B cell (primary cell): ENCODE measurements at regions of chr6 and their contacts with region 1.

Region 1: DNA sequence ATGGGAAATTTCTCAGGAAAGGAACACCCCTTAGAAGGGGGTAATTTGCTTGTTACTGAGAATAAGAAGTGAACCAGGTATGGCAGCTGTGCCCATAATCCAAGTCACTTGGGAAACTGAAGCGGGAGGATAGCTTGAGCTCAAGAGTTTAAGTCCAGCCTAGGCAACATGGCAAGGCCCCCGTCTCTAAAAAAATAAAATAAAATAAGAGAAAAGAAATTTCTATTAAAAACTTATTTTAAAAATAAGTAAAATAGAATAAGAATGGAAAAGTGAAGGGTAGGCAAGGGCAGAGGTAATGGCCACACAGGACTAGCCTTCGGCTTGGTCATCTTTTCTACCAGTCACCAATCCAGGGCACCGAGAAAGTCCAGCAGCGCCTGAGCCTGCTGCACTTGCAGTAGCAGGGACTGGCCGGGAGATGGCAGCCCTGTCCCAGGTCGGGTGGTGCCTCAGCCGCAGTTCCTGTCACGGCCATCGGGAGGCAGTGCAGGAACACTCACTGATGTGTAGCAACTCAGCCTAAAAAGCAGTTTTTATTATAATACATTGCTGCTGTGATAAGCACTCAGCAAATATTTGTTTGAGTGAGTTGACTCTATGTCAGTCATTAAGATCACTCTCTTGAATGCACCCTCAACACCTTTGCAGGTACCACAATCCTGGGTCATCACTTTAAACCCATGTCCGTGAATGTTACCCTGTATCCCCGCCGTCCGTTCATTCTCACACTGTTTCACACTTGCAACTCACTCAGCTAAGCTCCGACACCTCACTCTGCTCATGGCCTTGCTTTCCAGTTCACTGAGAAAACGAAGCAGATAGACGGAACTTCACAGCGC is 23.2 kb upstream of the GCM1 start:
- DNase-seq: peak; percentile 93
- ATAC-seq: peak; percentile 99
- H3K4me3 ChIP-seq: peak overlapping the region in 3 of 5 experiments; percentile 29 to 40 (median 34)
- H3K4me3 Mint-ChIP-seq: peak overlapping the region; percentile 65
- H3K27ac ChIP-seq: peak overlapping the region; percentile 76 to 88
- H3K27ac Mint-ChIP-seq: peak overlapping the region; percentile 81
- H3K4me1 ChIP-seq: peaks cover 28 to 30% of the 10 kb centered on the region in 2 donors
- H3K4me1 Mint-ChIP-seq: peaks cover 24% of the 10 kb centered on the region
- H3K27me3 ChIP-seq: no peaks in the 10 kb centered on the region
- H3K27me3 Mint-ChIP-seq: no peaks in the 10 kb centered on the region
- CTCF ChIP-seq: peak; percentile 100

Region 2: GRCh38 chr6:52995913-52996645 is 175.7 kb before region 1 on chr6:
- CTCF ChIA-PET with region 1: no interaction called
- POLR2A ChIA-PET with region 1: no interaction called
- intact Hi-C with region 1: loop called (anchors 2 kb)
- DNase-seq: peak; percentile 76
- ATAC-seq: no peak
- H3K4me3 ChIP-seq: peak overlapping the region; percentile 14 to 58 (median 47)
- H3K4me3 Mint-ChIP-seq: peak overlapping the region; percentile 98
- H3K27ac ChIP-seq: peak overlapping the region; percentile 43 to 95
- H3K27ac Mint-ChIP-seq: peak overlapping the region; percentile 100
- H3K4me1 ChIP-seq: peaks cover 8 to 14% of the 10 kb centered on the region in 2 donors
- H3K4me1 Mint-ChIP-seq: peaks cover 23% of the 10 kb centered on the region
- H3K27me3 ChIP-seq: no peaks in the 10 kb centered on the region
- H3K27me3 Mint-ChIP-seq: peaks cover 4% of the 10 kb centered on the region
- CTCF ChIP-seq: no peak

Region 3: DNA sequence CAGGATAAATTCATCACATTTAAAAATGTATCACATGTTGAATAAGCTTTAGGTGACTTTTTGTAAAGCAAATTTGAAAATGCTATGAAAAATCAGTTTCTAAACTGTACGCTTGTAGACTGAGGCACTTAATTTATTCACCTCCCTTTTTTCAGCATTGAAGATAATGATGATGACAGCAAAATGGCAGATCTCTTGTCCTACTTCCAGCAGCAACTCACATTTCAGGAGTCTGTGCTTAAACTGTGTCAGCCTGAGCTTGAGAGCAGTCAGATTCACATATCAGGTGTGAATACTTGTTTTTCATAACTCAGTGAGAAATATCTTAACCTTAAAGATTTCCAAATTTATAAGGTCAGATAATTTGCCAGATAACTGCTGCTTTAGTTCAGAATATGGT is 91.0 kb before region 1 on chr6:
- CTCF ChIA-PET with region 1: no interaction called
- POLR2A ChIA-PET with region 1: no interaction called
- intact Hi-C with region 1: no loop called
- DNase-seq: no peak
- ATAC-seq: no peak
- H3K4me3 ChIP-seq: no peak overlapping the region
- H3K4me3 Mint-ChIP-seq: no peak overlapping the region
- H3K27ac ChIP-seq: no peak overlapping the region
- H3K27ac Mint-ChIP-seq: no peak overlapping the region
- H3K4me1 ChIP-seq: no peaks in the 10 kb centered on the region
- H3K4me1 Mint-ChIP-seq: no peaks in the 10 kb centered on the region
- H3K27me3 ChIP-seq: no peaks in the 10 kb centered on the region
- H3K27me3 Mint-ChIP-seq: no peaks in the 10 kb centered on the region
- CTCF ChIP-seq: no peak

Region 4: DNA sequence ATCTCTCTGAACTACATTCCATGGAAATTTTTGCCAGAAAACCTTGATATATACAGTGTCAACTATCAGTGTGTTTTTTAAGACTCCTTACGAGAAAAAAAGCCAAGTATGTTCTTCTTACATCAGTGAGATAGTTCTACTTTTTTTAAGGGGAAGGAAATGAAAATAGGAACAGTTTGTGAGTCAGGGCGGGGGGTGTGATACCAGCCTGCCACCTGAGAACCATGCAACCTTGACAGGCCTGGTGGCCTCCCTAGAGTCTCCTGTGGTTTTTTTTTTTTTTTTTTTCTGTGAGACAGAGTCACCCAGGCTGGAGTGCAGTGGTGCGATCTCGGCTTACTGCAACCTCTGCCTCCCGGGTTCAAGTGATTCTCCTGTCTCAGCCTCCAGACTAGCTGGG is 73.1 kb after region 1 on chr6:
- CTCF ChIA-PET with region 1: interaction called, 31 read pairs
- POLR2A ChIA-PET with region 1: interaction called, 10 read pairs
- intact Hi-C with region 1: loop called (anchors 1 kb)
- DNase-seq: peak; percentile 92
- ATAC-seq: peak; percentile 84
- H3K4me3 ChIP-seq: peak overlapping the region in 3 of 5 experiments; percentile 6 to 40 (median 14)
- H3K4me3 Mint-ChIP-seq: peak overlapping the region; percentile 62
- H3K27ac ChIP-seq: peak overlapping the region; percentile 87 to 94
- H3K27ac Mint-ChIP-seq: peak overlapping the region; percentile 89
- H3K4me1 ChIP-seq: peaks cover 78 to 85% of the 10 kb centered on the region in 2 donors
- H3K4me1 Mint-ChIP-seq: peaks cover 87% of the 10 kb centered on the region
- H3K27me3 ChIP-seq: no peaks in the 10 kb centered on the region
- H3K27me3 Mint-ChIP-seq: no peaks in the 10 kb centered on the region
- CTCF ChIP-seq: no peak

Region 5: DNA sequence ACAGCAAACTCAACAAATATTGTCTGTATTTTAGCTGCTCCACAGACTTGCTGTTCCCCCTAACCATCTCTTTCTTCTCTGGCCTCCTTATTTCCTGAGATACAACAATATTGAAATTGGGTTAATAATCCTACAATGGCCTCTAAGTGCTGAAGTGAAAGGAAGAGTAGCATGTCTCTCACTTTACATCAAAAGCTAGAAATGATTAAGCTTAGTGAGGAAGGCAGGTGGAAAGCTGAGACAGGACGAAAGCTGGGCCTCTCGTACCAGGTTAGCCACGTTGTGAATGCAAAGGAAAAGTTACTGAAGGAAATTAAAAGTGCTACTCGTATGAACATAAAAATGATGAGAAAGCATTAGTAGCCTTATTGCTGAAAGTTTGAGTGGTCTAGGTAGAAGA is 113.1 kb after region 1 on chr6:
- CTCF ChIA-PET with region 1: interaction called, 160 read pairs
- POLR2A ChIA-PET with region 1: no interaction called
- intact Hi-C with region 1: no loop called
- DNase-seq: no peak
- ATAC-seq: no peak
- H3K4me3 ChIP-seq: no peak overlapping the region
- H3K4me3 Mint-ChIP-seq: peak overlapping the region; percentile 44
- H3K27ac ChIP-seq: peak overlapping the region in 1 of 2 donors; percentile 68
- H3K27ac Mint-ChIP-seq: peak overlapping the region; percentile 67
- H3K4me1 ChIP-seq: peaks cover 77 to 80% of the 10 kb centered on the region in 2 donors
- H3K4me1 Mint-ChIP-seq: peaks cover 86% of the 10 kb centered on the region
- H3K27me3 ChIP-seq: no peaks in the 10 kb centered on the region
- H3K27me3 Mint-ChIP-seq: no peaks in the 10 kb centered on the region
- CTCF ChIP-seq: no peak

Region 6: DNA sequence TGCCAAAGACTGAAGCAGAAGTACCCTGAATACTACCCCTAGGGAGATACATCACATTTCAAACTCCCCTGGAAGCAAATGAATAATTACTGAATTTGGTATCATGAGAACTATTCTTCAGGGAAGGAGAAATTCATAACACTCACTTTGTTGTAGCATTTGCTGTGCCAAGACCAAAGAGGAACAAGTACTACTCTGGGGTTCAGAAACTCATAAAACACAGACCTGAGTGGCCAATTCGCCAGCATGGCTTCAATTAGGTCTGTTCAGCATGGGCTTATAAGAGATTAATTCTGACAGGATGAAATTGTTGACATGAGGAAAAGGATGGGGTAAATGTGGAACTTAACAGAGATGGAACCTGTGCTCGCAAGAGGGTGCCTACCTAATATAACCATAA is 170.4 kb after region 1 on chr6:
- CTCF ChIA-PET with region 1: interaction called, 29 read pairs
- POLR2A ChIA-PET with region 1: interaction called, 10 read pairs
- intact Hi-C with region 1: no loop called
- DNase-seq: no peak
- ATAC-seq: peak; percentile 29
- H3K4me3 ChIP-seq: peak overlapping the region in 2 of 5 experiments; percentile 3 to 33
- H3K4me3 Mint-ChIP-seq: peak overlapping the region; percentile 77
- H3K27ac ChIP-seq: peak overlapping the region in 1 of 2 donors; percentile 76
- H3K27ac Mint-ChIP-seq: peak overlapping the region; percentile 89
- H3K4me1 ChIP-seq: peaks cover 88 to 91% of the 10 kb centered on the region in 2 donors
- H3K4me1 Mint-ChIP-seq: peaks cover 94% of the 10 kb centered on the region
- H3K27me3 ChIP-seq: no peaks in the 10 kb centered on the region
- H3K27me3 Mint-ChIP-seq: no peaks in the 10 kb centered on the region
- CTCF ChIP-seq: no peak

Region 7: GRCh38 chr6:53391170-53391569 is 219.3 kb after region 1 on chr6:
- CTCF ChIA-PET with region 1: no interaction called
- POLR2A ChIA-PET with region 1: no interaction called
- intact Hi-C with region 1: no loop called
- DNase-seq: no peak
- ATAC-seq: no peak
- H3K4me3 ChIP-seq: no peak overlapping the region
- H3K4me3 Mint-ChIP-seq: no peak overlapping the region
- H3K27ac ChIP-seq: no peak overlapping the region
- H3K27ac Mint-ChIP-seq: no peak overlapping the region
- H3K4me1 ChIP-seq: peaks cover 4 to 6% of the 10 kb centered on the region in 2 donors
- H3K4me1 Mint-ChIP-seq: peaks cover 6% of the 10 kb centered on the region
- H3K27me3 ChIP-seq: no peaks in the 10 kb centered on the region
- H3K27me3 Mint-ChIP-seq: no peaks in the 10 kb centered on the region
- CTCF ChIP-seq: no peak

Region 8: DNA sequence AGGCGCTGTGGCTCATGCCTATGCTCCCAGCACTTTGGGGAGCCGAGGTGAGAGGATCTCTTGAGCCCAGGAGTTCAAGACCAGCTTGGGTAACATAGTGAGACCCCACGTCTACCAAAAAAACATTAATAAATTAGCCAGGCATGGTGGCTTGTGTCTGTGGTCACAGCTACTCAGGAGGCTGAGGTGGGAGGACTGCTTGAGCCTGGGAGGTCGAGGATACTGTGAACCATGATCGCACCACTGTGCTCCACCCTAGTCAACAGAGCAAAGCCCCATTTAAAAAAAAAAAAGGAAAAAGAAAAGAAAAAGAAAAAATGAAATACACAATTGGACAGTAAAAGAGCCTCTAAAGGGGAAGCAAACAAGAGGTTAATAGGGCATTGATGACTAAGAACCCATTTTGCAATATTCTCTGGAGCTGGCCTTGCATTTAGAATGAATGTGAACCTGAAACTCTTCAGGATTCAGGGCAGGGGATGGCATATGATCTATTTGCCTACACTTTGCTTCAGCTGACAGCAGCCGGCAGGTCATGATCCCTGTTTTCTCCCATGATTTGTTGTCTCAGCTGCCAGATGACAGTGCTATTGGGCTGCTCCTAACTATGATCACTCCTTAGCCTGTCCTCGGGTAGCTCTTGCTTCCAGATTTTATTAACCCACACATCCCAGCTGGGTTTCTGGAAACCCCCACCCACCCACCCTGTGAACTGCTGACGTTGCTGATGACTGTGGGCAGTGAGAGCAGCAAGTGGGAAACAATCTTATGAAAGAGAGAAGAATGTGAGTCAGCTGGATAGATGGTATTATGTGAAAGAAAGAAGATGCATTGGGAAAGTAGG is 260.7 kb after region 1 on chr6:
- CTCF ChIA-PET with region 1: interaction called, 68 read pairs
- POLR2A ChIA-PET with region 1: no interaction called
- intact Hi-C with region 1: loop called (anchors 1 kb)
- DNase-seq: no peak
- ATAC-seq: no peak
- H3K4me3 ChIP-seq: no peak overlapping the region
- H3K4me3 Mint-ChIP-seq: no peak overlapping the region
- H3K27ac ChIP-seq: no peak overlapping the region
- H3K27ac Mint-ChIP-seq: no peak overlapping the region
- H3K4me1 ChIP-seq: peaks cover 0 to 6% of the 10 kb centered on the region in 2 donors
- H3K4me1 Mint-ChIP-seq: peaks cover 15% of the 10 kb centered on the region
- H3K27me3 ChIP-seq: no peaks in the 10 kb centered on the region
- H3K27me3 Mint-ChIP-seq: no peaks in the 10 kb centered on the region
- CTCF ChIP-seq: no peak

Region 9: GRCh38 chr6:53725791-53726431 is 554.1 kb after region 1 on chr6:
- CTCF ChIA-PET with region 1: interaction called, 7 read pairs
- POLR2A ChIA-PET with region 1: no interaction called
- intact Hi-C with region 1: loop called (anchors 5 kb)
- DNase-seq: peak; percentile 79
- ATAC-seq: peak; percentile 94
- H3K4me3 ChIP-seq: no peak overlapping the region
- H3K4me3 Mint-ChIP-seq: no peak overlapping the region
- H3K27ac ChIP-seq: no peak overlapping the region
- H3K27ac Mint-ChIP-seq: peak overlapping the region; percentile 1
- H3K4me1 ChIP-seq: peaks cover 6 to 8% of the 10 kb centered on the region in 2 donors
- H3K4me1 Mint-ChIP-seq: peaks cover 4% of the 10 kb centered on the region
- H3K27me3 ChIP-seq: peaks cover 0 to 4% (median 0%) of the 10 kb centered on the region in 4 experiments
- H3K27me3 Mint-ChIP-seq: peaks cover 13% of the 10 kb centered on the region
- CTCF ChIP-seq: peak; percentile 98